Activated naive CD4-positive, alpha-beta T cell treated with anti-CD3 and anti-CD28 coated beads, Interleukin-2, amount 10 ng/mL, durations not matched to agents 7 days and 5 days (primary cell): ENCODE measurements at regions of chr18 and their contacts with region 1.

Region 1: GRCh38 chr18:2994603-2995432 is 18.1 kb downstream of the LPIN2 start:
- DNase-seq: peak; percentile 82
- H3K4me3 Mint-ChIP-seq: no peak overlapping the region
- H3K27ac Mint-ChIP-seq: peak overlapping the region; percentile 6
- H3K4me1 Mint-ChIP-seq: peaks cover 78% of the 10 kb centered on the region
- H3K27me3 Mint-ChIP-seq: no peaks in the 10 kb centered on the region

Region 2: DNA sequence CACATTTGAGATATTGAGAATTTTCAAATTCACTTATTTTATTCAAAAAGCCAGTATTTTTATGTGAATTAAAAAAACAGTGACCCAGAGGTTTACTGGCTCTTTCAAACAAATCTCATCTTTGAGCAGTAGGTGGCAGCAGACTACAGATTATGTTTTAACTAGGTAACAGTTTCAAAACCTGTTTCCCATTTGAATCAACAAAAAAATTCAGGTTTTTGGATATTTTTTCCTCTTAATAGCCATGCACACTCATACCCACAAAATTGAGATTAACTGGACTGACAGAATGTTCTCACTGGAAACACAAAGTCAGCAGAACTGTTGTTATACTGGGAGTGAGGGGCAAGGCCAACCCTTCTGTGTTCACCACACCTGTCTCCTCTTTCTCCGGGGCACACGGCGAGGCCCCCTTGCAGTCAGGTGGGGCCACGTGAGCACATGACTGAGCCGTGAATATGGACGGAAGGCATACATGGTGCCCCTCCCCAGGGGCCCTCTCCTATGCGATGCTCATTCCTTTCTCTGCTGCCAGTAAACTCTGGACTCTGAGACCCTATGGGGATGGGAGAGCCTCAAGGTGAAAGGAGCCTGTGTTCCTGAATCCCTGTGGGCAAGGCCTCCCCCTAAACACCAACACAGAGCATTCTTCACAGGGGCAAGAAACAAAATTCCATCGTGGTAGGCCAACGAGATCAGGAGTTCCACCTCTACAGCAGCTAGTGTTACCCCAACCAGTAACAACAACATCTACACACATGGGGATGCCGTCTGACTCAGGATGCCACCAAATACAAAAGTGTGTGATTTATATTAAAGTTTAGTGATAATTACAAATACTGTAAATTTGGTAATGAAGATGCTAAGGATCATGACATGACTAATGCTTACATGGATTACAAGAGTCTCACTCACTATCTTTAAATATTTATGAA is 62.3 kb before region 1 on chr18:
- CTCF ChIA-PET with region 1: interaction called, 187 read pairs
- DNase-seq: peak; percentile 54
- H3K4me3 Mint-ChIP-seq: no peak overlapping the region
- H3K27ac Mint-ChIP-seq: peak overlapping the region; percentile 57
- H3K4me1 Mint-ChIP-seq: peaks cover 23% of the 10 kb centered on the region
- H3K27me3 Mint-ChIP-seq: no peaks in the 10 kb centered on the region

Region 3: DNA sequence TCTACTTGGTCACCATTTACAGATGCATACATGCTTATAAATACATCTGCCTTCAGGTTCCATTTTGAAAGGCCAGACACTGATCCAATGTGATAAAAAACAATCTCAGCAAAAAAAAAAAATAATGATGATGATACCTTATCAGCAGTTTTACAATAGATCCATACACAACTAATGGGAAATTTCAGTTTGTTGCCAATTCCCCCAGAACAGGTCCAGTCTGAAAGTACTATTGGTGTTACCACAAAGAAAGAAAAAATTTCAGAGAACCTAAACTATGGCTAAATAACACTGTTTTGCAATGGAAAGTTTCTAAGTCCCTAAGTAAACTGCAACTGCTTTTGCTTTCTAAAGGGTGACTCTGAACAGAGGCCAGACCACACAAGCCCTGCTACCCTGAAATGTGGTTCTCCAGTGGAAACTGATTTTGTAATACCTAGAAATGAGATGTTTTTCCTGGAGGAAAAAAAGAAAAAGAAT is 36.0 kb before region 1 on chr18:
- CTCF ChIA-PET with region 1: interaction called, 13 read pairs
- DNase-seq: peak; percentile 74
- H3K4me3 Mint-ChIP-seq: peak overlapping the region; percentile 72
- H3K27ac Mint-ChIP-seq: peak overlapping the region; percentile 99
- H3K4me1 Mint-ChIP-seq: peaks cover 96% of the 10 kb centered on the region
- H3K27me3 Mint-ChIP-seq: no peaks in the 10 kb centered on the region

Region 4: GRCh38 chr18:3012964-3013804 is 18.4 kb after region 1 on chr18 and contains the start of gene LPIN2:
- CTCF ChIA-PET with region 1: interaction called, 17 read pairs
- DNase-seq: peak; percentile 97
- H3K4me3 Mint-ChIP-seq: peak within 1 kb of the TSS; percentile 83
- H3K27ac Mint-ChIP-seq: peak within 1 kb of the TSS; percentile 90
- H3K4me1 Mint-ChIP-seq: peaks cover 70% of the 10 kb centered on the region
- H3K27me3 Mint-ChIP-seq: no peaks in the 10 kb centered on the region

Region 5: DNA sequence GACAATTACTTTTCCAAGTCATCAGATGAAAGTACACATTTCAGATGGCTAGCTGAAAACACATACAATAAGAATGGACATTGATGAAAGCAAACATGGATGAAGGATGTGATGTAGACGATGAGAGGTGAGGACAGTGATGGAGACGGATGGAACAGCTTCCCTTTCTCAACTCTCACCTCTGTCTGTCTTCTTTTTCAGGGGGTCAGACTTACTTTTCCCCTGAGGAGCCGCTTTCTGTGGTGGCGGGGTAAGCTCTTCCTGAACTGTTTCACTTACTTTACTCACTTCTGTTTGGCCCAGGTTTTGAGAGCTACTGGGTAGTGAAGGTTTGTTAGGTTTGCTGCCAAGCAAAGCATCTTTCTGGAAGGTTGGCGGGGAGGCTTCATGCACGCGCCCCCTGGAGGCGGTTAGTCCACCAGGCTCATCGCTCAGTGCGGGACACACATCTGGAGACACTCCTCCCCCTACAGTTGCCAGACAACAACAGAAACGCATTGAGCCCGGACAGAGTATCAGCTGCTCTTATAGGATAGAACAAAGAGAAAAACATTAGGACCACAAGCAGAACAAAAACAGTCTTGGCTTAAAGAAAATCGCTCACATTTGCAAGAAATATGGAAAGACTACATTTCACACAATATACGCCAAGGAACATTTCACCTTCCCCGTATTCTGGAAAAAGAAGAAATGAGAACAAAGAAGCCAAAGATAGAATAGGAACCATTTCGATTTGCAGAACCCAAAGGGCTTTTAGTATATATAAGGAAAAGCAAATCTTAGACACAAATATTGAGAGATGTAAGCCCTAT is 134.4 kb after region 1 on chr18:
- CTCF ChIA-PET with region 1: interaction called, 95 read pairs
- DNase-seq: peak; percentile 89
- H3K4me3 Mint-ChIP-seq: no peak overlapping the region
- H3K27ac Mint-ChIP-seq: no peak overlapping the region
- H3K4me1 Mint-ChIP-seq: peaks cover 10% of the 10 kb centered on the region
- H3K27me3 Mint-ChIP-seq: peaks cover 3% of the 10 kb centered on the region

Region 6: DNA sequence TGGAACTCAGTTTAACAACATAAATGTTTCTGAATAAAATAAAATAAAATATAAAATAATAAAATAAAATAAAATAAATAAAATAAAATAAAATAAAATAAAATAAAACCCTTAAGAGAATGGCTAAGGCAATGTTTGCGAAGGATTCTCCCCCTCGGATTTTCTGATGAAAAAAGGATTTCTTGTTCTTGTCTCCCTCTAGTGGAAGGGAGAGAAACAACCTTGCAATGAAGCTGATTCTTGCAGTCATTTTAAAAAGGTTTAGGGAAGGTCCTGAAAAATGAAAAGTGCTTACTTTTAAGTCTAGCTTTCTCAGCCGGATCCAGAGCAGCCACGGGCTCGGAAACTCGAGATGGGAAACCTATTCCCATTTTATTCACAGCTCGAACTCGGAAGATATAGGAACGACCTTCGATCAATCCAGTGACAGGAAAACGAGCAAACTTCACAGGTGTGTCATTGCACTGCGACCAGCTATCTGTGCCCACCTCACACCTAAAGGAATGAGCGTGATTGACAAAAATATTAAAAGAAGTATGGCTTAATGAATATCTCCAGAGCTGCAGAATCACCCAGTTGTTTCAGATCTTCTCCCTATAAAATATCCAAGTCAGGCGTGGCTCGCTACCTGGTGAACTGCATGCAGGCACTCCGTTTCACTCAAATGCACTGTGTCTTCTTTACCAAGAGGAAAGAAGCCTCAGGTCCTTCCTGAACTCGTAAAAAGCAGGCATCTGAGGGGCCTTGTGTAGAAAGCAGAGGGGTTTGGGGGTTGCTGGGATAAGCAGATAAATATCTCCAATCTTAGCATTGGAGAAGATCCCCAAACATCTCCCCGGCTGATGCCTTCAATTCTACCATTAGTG is 156.8 kb after region 1 on chr18:
- CTCF ChIA-PET with region 1: interaction called, 35 read pairs
- DNase-seq: no peak
- H3K4me3 Mint-ChIP-seq: no peak overlapping the region
- H3K27ac Mint-ChIP-seq: no peak overlapping the region
- H3K4me1 Mint-ChIP-seq: peaks cover 6% of the 10 kb centered on the region
- H3K27me3 Mint-ChIP-seq: peaks cover 7% of the 10 kb centered on the region